Right ventricle myocardium inferior (tissue), 1 donor: ENCODE measurements at regions of chr16 and their contacts with region 1.

Region 1: DNA sequence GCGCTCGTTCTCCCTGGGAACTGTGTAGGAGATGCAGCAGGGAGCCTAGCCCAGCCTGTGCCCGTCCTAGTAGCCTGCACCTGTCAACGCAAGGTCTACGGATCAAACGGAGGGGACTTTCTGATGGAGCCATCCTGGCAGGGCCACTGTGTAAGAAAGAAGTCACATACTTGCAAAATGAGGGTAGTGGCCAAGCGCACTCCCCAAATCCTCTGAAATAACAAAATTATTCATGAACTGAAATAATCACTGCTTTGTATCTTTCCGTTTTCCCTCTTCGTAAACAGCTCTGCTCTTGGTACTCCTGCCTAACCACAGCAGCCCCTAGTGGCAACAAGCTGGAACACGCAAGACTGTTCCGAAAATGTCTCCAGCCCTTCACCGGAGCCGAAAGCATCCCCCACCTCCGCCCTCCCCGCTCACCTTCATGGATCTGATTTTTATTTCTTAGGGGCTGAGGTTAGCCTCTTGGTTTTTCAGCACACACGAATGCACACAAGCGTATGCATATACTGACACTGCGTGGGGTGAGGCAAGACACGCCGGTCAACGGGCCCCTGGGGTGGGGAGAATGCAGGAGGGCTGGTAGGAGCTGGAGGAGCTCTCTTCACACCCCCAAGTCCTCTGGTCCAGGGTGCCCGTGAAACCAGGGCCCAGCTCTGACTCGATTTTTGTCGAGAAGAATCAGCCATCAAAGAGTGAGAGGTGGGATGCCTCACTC is 100.8 kb downstream of the ABCC12 start:
- DNase-seq: no peak
- ATAC-seq: peak; percentile 72

Region 2: DNA sequence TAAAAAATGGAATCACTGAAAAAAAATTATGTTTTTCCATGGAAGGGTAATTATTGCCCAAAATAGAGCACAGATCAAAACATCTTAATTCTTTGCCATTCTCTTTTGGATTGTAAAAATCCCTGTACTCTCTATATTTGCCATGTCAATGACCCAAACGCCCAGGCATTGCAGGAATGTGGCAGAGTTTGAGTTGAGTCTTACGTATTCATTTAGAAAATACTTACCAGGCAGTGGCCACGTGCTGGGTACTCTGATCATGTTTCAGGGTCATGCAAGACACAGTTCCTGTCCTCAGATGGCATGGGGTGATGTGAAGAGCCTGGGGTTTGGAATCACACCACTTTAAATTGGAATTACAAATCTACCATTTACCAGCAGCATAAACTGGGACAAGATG is 166.9 kb before region 1 on chr16:
- intact Hi-C with region 1: no loop called
- DNase-seq: no peak
- ATAC-seq: no peak

Region 3: GRCh38 chr16:48156790-48157209 is 101.8 kb after region 1 on chr16:
- intact Hi-C with region 1: loop called (anchors 5 kb)
- DNase-seq: peak; percentile 92
- ATAC-seq: peak; percentile 46